Vagina (tissue), 2 donors: ENCODE measurements at regions of chr1 and their contacts with region 1.

Region 1: GRCh38 chr1:15847100-15847892 is at the start of gene SPEN:
- DNase-seq: peak in 1 of 2 donors; percentile 96
- H3K4me3 ChIP-seq: peak within 1 kb of the TSS; percentile 94 to 99
- H3K27ac ChIP-seq: peak within 1 kb of the TSS; percentile 96
- H3K4me1 ChIP-seq: peaks cover 40% of the 10 kb centered on the region
- H3K27me3 ChIP-seq: no peaks in the 10 kb centered on the region
- CTCF ChIP-seq: peak in 1 of 3 experiments; percentile 16
- POLR2A ChIP-seq: peak in 1 of 2 donors; percentile 79
- total RNA-seq, gene SPEN: 55.2 TPM

Region 2: DNA sequence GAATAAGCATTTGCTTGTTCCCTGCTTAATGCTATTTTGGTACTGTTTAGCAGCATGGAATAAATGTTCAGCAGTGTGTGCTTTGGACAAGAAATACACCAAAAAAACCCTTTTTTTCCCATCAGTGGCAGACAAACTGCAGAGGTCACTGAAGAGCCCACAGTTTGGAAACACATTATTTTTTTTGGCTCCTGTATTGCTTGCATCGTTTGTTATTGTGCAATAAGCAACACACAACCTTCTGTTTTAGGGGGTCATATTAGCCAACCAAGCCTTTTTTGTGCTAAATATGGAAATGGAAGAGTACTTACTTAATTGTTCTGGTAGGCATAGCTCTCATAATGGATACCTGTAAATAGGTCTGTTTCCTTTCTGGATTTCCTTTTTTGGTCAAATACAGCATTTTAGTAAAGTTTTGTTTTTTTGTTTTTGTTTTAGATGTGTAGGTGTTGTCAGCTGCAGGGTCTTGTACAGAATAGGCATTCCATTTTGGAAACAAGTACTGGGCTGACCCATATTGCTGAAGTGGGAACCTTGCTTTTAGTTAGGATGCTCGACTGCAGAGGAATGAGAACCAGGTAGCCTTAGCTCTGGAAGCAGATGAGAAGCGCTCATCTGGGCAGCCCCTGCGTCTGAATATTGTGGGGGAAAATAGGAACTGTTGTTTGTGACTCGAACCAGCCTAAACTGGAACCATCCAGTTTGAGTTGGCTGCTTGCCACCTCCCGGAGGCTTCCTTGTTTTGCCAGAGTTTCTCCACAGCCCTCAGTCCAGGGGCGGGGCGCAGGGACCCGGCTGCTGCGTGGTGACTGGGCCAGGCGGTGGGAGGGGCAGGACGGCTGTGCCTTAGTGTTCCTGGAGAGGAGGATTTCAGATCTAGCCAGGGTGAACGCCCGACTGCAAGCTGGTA is 38.7 kb after region 1 on chr1:
- intact Hi-C with region 1: loop called (anchors 5 kb)
- DNase-seq: peak in 1 of 2 donors; percentile 98
- H3K4me3 ChIP-seq: peak overlapping the region; percentile 32 to 51
- H3K27ac ChIP-seq: peak overlapping the region; percentile 88
- H3K4me1 ChIP-seq: peaks cover 63% of the 10 kb centered on the region
- H3K27me3 ChIP-seq: no peaks in the 10 kb centered on the region
- CTCF ChIP-seq: no peak
- POLR2A ChIP-seq: no peak

Region 3: GRCh38 chr1:15949453-15950245 is 102.4 kb after region 1 on chr1:
- intact Hi-C with region 1: loop called (anchors 5 kb)
- DNase-seq: peak in 1 of 2 donors; percentile 99
- H3K4me3 ChIP-seq: peak overlapping the region; percentile 23 to 34
- H3K27ac ChIP-seq: peak overlapping the region; percentile 96
- H3K4me1 ChIP-seq: peaks cover 67% of the 10 kb centered on the region
- H3K27me3 ChIP-seq: no peaks in the 10 kb centered on the region
- CTCF ChIP-seq: no peak
- POLR2A ChIP-seq: peak in 1 of 2 donors; percentile 41

Region 4: GRCh38 chr1:16101623-16102022 is 254.3 kb after region 1 on chr1:
- intact Hi-C with region 1: no loop called
- DNase-seq: no peak
- H3K4me3 ChIP-seq: no peak overlapping the region
- H3K27ac ChIP-seq: no peak overlapping the region
- H3K4me1 ChIP-seq: no peaks in the 10 kb centered on the region
- H3K27me3 ChIP-seq: no peaks in the 10 kb centered on the region
- CTCF ChIP-seq: no peak
- POLR2A ChIP-seq: no peak